Mammary epithelial cell (primary cell): ENCODE measurements at regions of chr5 and their contacts with region 1.

Region 1: GRCh38 chr5:56264417-56265025 is 31.4 kb upstream of the ANKRD55 start:
- DNase-seq: peak; percentile 45
- H3K4me3 ChIP-seq: no peak overlapping the region
- H3K27ac ChIP-seq: no peak overlapping the region
- H3K4me1 ChIP-seq: peaks cover 2% of the 10 kb centered on the region
- H3K27me3 ChIP-seq: no peaks in the 10 kb centered on the region
- CTCF ChIP-seq: peak; percentile 88 to 90

Region 2: GRCh38 chr5:55982957-55983381 is 281.6 kb before region 1 on chr5:
- CTCF ChIA-PET with region 1: no interaction called
- dilution Hi-C with region 1: no loop called
- in situ Hi-C with region 1: no loop called
- intact Hi-C with region 1: loop called (anchors 5 kb)
- DNase-seq: no peak
- H3K4me3 ChIP-seq: no peak overlapping the region
- H3K27ac ChIP-seq: no peak overlapping the region
- H3K4me1 ChIP-seq: peaks cover 1% of the 10 kb centered on the region
- H3K27me3 ChIP-seq: no peaks in the 10 kb centered on the region
- CTCF ChIP-seq: peak in 1 of 2 donors; percentile 43